HepG2 (cell line): ENCODE measurements at regions of chr6 and their contacts with region 1.

Region 1: DNA sequence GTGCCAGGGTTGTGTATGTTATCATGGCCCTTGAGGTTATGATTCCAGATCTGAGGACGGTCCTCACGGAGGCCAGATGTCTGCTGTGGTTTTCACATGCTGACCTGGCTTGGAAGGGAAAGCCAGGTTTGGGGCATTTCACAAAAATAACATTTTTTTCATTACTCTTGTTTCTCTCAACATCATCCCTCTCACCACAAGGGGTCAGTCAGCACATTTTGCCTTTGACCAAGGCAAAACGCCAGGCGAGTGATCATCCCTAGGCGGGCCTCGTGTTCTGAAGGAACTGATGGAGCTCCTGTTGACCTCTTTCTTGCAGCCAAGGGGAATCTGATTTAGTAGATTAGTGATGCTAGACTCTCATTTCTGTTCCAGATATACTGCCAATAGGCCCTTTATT is 133.5 kb downstream of the TBC1D7 start:
- DNase-seq: peak; percentile 64
- ATAC-seq: peak; percentile 87
- H3K4me3 ChIP-seq: no peak overlapping the region
- H3K27ac ChIP-seq: no peak overlapping the region
- H3K4me1 ChIP-seq: peaks cover 2% of the 10 kb centered on the region; the same call in 1 of the 2 replicates
- H3K27me3 ChIP-seq: 0 out of 5 replicates have a peak, but pooled peaks cover 0 to 12% of the 10 kb centered on the region in 2 experiments
- CTCF ChIP-seq: peak; percentile 79
- EP300 ChIP-seq: no peak
- POLR2A ChIP-seq: no peak
- RAD21 ChIP-seq: peak; percentile 63

Region 2: GRCh38 chr6:12297363-12298016 is 897.4 kb before region 1 on chr6:
- CTCF ChIA-PET with region 1: no interaction called
- POLR2A ChIA-PET with region 1: no interaction called
- in situ Hi-C with region 1: no loop called
- intact Hi-C with region 1: no loop called
- DNase-seq: peak; percentile 46
- ATAC-seq: peak; percentile 27; the same call in 1 of the 3 replicates
- H3K4me3 ChIP-seq: no peak overlapping the region
- H3K27ac ChIP-seq: no peak overlapping the region
- H3K4me1 ChIP-seq: peaks cover 30% of the 10 kb centered on the region
- H3K27me3 ChIP-seq: no peaks in the 10 kb centered on the region; a peak in 1 of 5 replicates
- CTCF ChIP-seq: no peak
- EP300 ChIP-seq: no peak
- POLR2A ChIP-seq: no peak
- RAD21 ChIP-seq: no peak

Region 3: GRCh38 chr6:13277836-13278563 is 83.1 kb after region 1 on chr6:
- CTCF ChIA-PET with region 1: no interaction called
- POLR2A ChIA-PET with region 1: no interaction called
- in situ Hi-C with region 1: no loop called
- intact Hi-C with region 1: loop called (anchors 1 kb)
- DNase-seq: no peak
- ATAC-seq: peak; percentile 83
- H3K4me3 ChIP-seq: no peak overlapping the region
- H3K27ac ChIP-seq: no peak overlapping the region
- H3K4me1 ChIP-seq: peaks cover 10% of the 10 kb centered on the region
- H3K27me3 ChIP-seq: no peaks in the 10 kb centered on the region
- CTCF ChIP-seq: peak; percentile 71
- EP300 ChIP-seq: no peak
- POLR2A ChIP-seq: no peak
- RAD21 ChIP-seq: peak; percentile 43; the same call in 1 of the 2 replicates